K562 (cell line): ENCODE measurements at regions of chr6 and their contacts with region 1.

Region 1: DNA sequence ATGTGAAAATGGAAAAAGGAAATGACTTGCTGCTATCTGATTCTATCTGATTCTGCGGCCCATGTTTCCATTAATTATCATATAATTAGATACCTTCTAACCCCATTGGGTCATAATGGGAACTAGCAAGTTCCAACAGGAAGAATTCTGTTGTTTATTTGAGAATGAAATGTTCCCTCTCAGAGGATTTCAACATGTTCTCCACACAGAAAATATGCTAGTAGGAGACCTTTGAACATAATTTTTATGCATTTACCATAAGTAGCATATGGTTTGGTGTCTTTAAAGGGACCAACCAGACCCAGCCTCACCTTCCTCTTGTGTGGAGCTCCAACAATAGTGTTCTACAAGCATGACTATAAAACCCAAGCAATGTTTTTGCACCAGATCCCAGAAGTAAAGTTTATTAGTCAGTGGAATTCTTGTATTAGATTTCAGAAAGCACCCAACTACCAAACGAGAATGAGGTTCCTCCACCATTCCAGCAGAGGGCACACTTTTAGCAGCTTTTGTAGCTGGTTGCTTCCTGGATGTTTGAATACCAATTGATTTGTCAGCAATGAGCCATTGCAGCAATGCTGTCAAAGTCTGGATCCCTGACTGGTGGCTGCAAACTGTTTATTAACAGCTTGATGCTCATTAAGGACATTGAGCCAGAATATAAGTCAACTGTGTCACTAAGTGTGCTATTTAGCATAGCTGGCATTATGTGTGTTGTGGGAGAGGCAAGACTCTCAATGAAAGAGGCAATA is 143.6 kb upstream of the GJE1 start:
- DNase-seq: peak in 3 of 4 experiments; percentile 23 to 62 (median 36)
- ATAC-seq: peak; percentile 81
- H3K4me3 ChIP-seq: no peak overlapping the region
- H3K27ac ChIP-seq: no peak overlapping the region
- H3K4me1 ChIP-seq: no peaks in the 10 kb centered on the region
- H3K27me3 ChIP-seq: no peaks in the 10 kb centered on the region
- CTCF ChIP-seq: peak; percentile 65 to 76 (median 69)
- EP300 ChIP-seq: no peak
- POLR2A ChIP-seq: no peak
- RAD21 ChIP-seq: peak; percentile 73 to 86

Region 2: DNA sequence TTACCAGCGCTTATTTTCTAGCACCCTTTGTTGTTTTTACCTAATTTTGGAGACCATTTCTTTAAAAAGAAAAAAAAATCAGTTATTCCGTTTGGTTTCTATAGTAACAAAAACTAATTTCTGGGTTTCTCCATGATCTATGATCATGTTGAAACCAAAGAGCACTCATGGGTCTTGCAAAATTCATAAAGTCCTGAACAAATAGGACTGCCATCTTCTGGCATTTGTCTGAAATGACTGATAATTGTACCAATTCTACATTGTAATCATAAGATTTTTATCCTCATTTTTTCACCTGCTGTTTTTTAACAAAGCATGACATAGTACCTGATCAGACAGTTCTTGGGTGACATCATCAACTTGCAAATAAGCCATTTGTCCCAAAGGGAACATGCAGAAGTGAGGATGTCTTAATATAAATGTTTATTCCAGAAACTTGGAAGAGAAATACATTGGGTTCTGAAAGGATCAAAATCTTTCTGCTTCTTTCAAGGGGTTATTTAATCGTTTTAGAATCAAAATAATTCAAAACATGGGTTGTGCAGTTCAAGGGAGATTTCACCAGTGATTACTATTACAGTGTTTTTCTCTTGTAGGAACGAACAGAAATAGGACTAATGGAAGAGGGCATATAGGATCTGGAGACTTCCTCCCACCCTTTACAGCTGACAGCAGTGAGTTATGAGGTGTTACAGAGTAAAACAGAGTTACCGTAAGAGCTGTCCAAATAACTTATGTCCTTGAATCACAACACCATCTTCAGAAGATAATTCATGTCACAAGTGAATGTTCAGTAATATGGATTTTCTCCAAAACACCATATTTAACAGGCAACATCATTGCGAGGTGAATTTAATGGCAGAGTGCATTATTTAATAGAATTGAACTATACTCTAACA is 56.5 kb after region 1 on chr6:
- CTCF ChIA-PET with region 1: interaction called, 3 read pairs
- POLR2A ChIA-PET with region 1: no interaction called
- in situ Hi-C with region 1: no loop called
- intact Hi-C with region 1: loop called (anchors 2 kb)
- DNase-seq: no peak
- ATAC-seq: peak; percentile 28; the same call in 1 of the 3 replicates
- H3K4me3 ChIP-seq: no peak overlapping the region
- H3K27ac ChIP-seq: no peak overlapping the region
- H3K4me1 ChIP-seq: no peaks in the 10 kb centered on the region
- H3K27me3 ChIP-seq: no peaks in the 10 kb centered on the region
- CTCF ChIP-seq: peak in 1 of 3 experiments; percentile 36; a peak in 1 of 6 replicates
- EP300 ChIP-seq: no peak
- POLR2A ChIP-seq: no peak
- RAD21 ChIP-seq: peak; percentile 19 to 56; a peak in 2 of 4 replicates

Region 3: GRCh38 chr6:142071981-142072380 is 82.9 kb after region 1 on chr6:
- CTCF ChIA-PET with region 1: no interaction called
- POLR2A ChIA-PET with region 1: no interaction called
- in situ Hi-C with region 1: no loop called
- intact Hi-C with region 1: loop called (anchors 1 kb)
- DNase-seq: peak in 1 of 4 experiments; percentile 12
- ATAC-seq: peak; percentile 81
- H3K4me3 ChIP-seq: no peak overlapping the region
- H3K27ac ChIP-seq: no peak overlapping the region
- H3K4me1 ChIP-seq: no peaks in the 10 kb centered on the region
- H3K27me3 ChIP-seq: no peaks in the 10 kb centered on the region
- CTCF ChIP-seq: peak; percentile 8 to 31 (median 22); a peak in 2 of 6 replicates
- EP300 ChIP-seq: no peak
- POLR2A ChIP-seq: no peak
- RAD21 ChIP-seq: peak in 1 of 2 experiments; percentile 39; a peak in 2 of 4 replicates

Region 4: GRCh38 chr6:142112451-142113061 is 123.4 kb after region 1 on chr6:
- CTCF ChIA-PET with region 1: interaction called, 9 read pairs
- POLR2A ChIA-PET with region 1: no interaction called
- in situ Hi-C with region 1: no loop called
- intact Hi-C with region 1: loop called (anchors 1 kb)
- DNase-seq: peak; percentile 23 to 82 (median 49)
- ATAC-seq: peak; percentile 65
- H3K4me3 ChIP-seq: no peak overlapping the region
- H3K27ac ChIP-seq: no peak overlapping the region
- H3K4me1 ChIP-seq: no peaks in the 10 kb centered on the region
- H3K27me3 ChIP-seq: no peaks in the 10 kb centered on the region
- CTCF ChIP-seq: peak; percentile 56 to 85 (median 78); a peak in 5 of 6 replicates
- EP300 ChIP-seq: no peak
- POLR2A ChIP-seq: no peak
- RAD21 ChIP-seq: peak; percentile 85 to 92

Region 5: DNA sequence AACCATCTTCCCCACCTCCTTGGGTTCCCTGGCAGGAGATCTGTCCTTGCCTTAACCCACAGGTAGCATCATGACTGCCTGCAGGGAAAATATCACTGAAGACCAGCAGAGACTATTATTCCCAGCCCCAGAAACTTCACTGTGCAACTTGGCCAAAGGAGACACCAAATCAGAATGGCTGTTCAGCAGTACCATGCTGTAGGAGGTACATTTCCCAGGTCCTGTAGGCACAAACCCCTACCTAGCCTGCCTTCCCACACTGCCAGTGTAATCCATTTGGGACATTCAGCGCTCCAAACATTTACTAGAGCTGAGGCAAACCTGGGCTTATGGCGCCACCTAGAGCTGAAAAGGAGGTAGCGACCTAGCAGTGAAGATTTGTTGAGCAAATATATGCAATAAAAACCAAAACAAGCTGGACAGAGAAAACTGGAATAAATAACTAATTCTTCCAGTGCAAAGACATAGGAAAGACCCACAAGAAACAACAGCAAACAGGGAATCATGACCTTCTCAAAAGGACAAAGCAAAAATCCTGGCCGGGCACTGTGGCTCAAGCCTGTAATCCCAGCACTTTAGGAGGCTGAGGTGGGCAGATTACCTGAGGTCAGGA is 218.2 kb after region 1 on chr6:
- CTCF ChIA-PET with region 1: no interaction called
- POLR2A ChIA-PET with region 1: no interaction called
- in situ Hi-C with region 1: no loop called
- intact Hi-C with region 1: loop called (anchors 5 kb)
- DNase-seq: peak; percentile 42 to 68 (median 50)
- ATAC-seq: peak; percentile 96
- H3K4me3 ChIP-seq: no peak overlapping the region
- H3K27ac ChIP-seq: no peak overlapping the region
- H3K4me1 ChIP-seq: no peaks in the 10 kb centered on the region
- H3K27me3 ChIP-seq: no peaks in the 10 kb centered on the region
- CTCF ChIP-seq: peak; percentile 76 to 80 (median 78)
- EP300 ChIP-seq: no peak
- POLR2A ChIP-seq: no peak
- RAD21 ChIP-seq: peak in 1 of 2 experiments; percentile 70; a peak in 2 of 4 replicates